Heart right ventricle (tissue), 16 donors: ENCODE measurements at regions of chr15 and their contacts with region 1.

Region 1: DNA sequence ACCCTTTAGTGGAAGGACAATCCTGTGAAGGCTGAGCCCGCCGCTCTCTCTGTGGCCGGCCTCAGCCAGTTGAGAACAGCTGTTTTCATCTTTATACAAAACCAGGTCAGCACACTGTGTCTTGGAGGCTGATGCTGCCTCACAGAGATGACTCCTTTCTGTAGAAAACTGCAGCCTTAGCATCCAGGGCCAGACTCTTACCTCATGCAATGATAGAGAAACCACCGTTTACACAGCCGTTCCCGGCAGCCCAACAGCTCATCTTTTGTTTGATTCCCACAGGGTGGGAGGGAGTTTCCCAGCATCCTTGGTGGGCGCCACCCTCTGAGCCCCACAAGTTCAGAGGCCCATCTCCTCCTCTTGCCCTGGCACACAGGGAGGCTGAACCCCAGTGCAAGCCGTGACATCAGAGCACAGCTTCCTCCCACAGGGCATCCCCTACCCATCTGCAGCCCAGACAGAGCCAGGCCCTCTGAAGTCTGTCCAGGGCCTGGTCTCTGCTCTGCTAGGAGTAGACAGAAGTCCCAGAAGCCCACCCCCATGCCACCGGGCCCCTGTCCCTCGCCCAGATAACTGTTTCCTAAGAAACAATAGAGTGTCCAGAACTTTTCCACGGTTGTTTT is 105.0 kb downstream of the LRRK1 start:
- DNase-seq: peak in 1 of 2 donors; percentile 52
- ATAC-seq: peak; percentile 69 to 89 (median 84)
- H3K4me3 ChIP-seq: no peak overlapping the region
- H3K27ac ChIP-seq: peak overlapping the region; percentile 15 to 81 (median 72)
- H3K4me1 ChIP-seq: peaks cover 0 to 44% (median 18%) of the 10 kb centered on the region in 9 donors
- H3K27me3 ChIP-seq: peaks cover 0 to 9% (median 0%) of the 10 kb centered on the region in 7 donors
- CTCF ChIP-seq: no peak

Region 2: DNA sequence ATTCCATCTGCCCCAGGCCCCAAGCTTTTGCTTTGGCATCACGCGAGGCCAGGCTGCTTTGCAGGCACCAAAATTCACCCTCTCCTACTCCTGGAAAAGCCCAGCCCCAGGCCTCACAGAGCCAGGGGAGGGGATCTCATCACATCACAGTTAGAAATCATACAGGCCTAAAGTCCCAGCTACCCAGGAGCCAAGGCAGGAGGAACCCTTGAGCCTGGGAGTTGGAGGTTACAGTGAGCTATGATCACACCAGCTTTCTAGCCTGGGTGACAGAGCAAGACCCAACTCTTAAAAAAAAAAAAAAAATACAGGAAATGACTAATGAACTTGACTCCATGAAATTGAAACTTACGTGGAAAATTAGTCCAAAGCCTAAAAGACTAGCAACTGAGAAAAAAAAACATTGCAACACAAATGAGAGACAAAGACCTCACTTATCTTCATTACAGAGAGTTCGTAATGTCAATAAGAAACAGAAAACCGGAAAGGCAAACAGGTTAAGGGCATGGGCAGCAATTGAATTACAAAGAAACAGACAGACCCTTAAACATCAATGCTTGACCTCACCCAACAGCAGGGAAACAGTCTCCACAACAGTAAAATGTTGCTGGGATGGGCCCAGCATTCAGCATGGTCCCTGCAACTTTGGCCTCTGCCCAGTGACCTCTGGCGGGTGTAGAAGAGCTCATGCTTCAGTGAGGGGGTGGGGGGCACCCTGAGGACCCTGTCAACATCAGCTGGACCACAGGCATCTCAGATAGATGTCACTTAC is 46.5 kb after region 1 on chr15:
- intact Hi-C with region 1: loop called in 1 of 10 experiments (anchors 5 kb)
- DNase-seq: no peak
- ATAC-seq: peak; percentile 62 to 87 (median 78)
- H3K4me3 ChIP-seq: no peak overlapping the region
- H3K27ac ChIP-seq: peak overlapping the region; percentile 13 to 88 (median 68)
- H3K4me1 ChIP-seq: peaks cover 0 to 39% (median 29%) of the 10 kb centered on the region in 9 donors
- H3K27me3 ChIP-seq: no peaks in the 10 kb centered on the region
- CTCF ChIP-seq: no peak

Region 3: DNA sequence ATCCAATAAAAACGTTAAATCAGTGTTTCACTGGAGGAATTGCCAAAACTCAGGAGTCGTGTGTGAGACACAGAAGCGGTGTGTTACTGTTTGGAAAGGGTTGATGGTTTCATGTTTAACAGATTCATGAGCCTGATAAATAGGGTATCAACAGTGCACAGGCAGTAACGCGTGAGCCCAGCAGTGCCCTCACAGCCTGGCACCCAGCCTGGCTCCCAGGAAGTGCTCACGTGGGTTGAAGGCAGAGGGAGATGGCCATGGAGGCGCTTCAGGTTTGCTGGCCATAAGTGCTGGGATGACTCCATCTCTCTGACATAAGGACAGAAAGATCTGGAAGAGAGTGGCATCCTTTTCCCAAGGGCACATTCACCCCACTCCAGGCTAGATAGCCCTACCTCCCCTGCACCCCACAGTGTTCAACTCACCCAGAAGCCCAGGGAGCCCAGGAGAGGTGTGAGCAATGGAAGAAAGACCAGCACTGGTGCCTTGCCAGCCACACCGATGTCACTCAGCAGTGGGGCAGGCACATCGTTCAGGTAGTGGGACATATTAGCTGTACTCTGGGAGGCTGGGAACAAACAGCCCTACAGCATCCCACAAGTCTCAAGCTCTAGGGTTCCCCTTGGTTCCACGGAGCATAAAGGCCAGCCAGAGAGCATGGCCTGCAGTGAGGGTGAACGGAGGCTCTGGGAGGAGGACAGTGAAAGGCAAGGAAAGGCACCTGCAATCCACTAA is 59.3 kb after region 1 on chr15:
- intact Hi-C with region 1: loop called in 8 of 10 experiments (anchors 5 to 10 kb)
- DNase-seq: no peak
- ATAC-seq: no peak
- H3K4me3 ChIP-seq: no peak overlapping the region
- H3K27ac ChIP-seq: no peak overlapping the region
- H3K4me1 ChIP-seq: peaks cover 0 to 6% (median 3%) of the 10 kb centered on the region in 9 donors
- H3K27me3 ChIP-seq: no peaks in the 10 kb centered on the region
- CTCF ChIP-seq: no peak

Region 4: GRCh38 chr15:101242160-101242998 is 218.2 kb after region 1 on chr15:
- intact Hi-C with region 1: no loop called
- DNase-seq: peak in 1 of 2 donors; percentile 34
- ATAC-seq: peak in 7 of 8 donors; percentile 37 to 70 (median 45)
- H3K4me3 ChIP-seq: peak overlapping the region in 2 of 10 donors; percentile 7 to 30
- H3K27ac ChIP-seq: peak overlapping the region in 8 of 10 donors; percentile 4 to 80 (median 46)
- H3K4me1 ChIP-seq: peaks cover 10 to 100% (median 75%) of the 10 kb centered on the region in 9 donors
- H3K27me3 ChIP-seq: no peaks in the 10 kb centered on the region
- CTCF ChIP-seq: no peak

Region 5: DNA sequence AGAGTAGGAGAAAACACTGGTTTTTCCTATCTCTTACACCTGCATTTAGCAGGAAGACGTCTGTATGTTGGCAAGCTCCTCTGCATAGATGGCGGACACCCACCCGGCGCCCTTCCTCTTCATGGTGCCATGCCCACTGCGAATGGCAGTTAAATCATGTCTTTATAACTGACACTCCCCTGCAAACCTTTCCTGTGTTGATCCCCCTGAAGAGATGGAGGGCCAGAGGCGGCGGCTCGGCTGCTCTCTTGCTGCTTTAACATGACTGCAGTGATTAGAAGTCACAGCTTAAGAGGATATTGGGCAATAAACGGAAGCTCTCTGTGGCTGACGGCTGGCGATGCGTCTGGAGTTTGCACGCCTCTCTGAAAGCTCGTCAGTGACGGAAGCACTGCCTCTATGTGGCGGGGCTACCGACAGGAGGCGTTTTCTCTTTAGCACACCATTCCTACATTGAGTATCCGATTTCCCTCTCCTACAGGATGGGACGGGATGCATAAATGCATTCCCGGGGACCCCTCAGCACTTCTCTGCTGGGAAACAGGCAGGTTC is 296.4 kb after region 1 on chr15:
- intact Hi-C with region 1: no loop called
- DNase-seq: peak in 1 of 2 donors; percentile 37
- ATAC-seq: peak in 7 of 8 donors; percentile 34 to 70 (median 52)
- H3K4me3 ChIP-seq: peak overlapping the region in 1 of 10 donors; percentile 33
- H3K27ac ChIP-seq: peak overlapping the region in 1 of 10 donors; percentile 53
- H3K4me1 ChIP-seq: peaks cover 0 to 11% (median 0%) of the 10 kb centered on the region in 9 donors
- H3K27me3 ChIP-seq: peaks cover 0 to 4% (median 0%) of the 10 kb centered on the region in 7 donors
- CTCF ChIP-seq: peak in 3 of 9 donors; percentile 8 to 46 (median 29)